ENCODE measurements at regions of chr9 and their contacts with region 1.

Region 1: GRCh38 chr9:21933865-21934264 is 60.3 kb downstream of the CDKN2A start:
- DNase-seq: no peak
- ATAC-seq: no peak

Region 2: DNA sequence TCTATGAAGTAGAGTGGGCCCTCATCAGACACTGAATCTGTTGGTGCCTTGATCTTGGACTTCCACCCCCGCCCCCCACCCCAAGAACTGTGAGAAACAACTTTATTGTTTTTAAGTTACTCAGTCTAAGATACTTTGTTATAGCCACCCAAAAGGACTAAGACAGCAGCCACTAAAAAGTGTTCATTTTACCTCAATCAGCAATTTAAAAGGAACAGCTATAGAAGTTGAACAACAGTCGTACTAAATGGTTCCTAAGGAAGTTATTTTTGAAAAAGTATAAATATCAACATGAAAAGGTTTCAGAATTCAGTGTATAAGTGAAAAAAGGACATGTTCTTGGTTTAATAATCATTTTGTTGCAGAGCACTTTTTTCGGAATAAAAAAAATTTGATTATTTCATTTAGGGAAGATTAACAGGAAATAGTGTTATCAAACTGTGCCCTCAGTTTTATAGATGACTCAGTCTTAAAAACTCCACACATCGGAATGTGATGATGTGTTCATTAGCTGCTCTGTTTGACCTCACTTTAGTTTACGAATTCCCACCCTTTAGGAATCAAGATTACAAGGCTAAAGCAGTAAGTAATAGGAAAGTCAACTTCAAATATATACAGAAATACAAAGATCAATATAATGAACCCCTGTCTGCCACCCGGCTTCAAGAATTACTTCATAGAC is 60.2 kb before region 1 on chr9:
- intact Hi-C with region 1: loop called (anchors 2 kb)
- DNase-seq: no peak
- ATAC-seq: no peak

Region 3: DNA sequence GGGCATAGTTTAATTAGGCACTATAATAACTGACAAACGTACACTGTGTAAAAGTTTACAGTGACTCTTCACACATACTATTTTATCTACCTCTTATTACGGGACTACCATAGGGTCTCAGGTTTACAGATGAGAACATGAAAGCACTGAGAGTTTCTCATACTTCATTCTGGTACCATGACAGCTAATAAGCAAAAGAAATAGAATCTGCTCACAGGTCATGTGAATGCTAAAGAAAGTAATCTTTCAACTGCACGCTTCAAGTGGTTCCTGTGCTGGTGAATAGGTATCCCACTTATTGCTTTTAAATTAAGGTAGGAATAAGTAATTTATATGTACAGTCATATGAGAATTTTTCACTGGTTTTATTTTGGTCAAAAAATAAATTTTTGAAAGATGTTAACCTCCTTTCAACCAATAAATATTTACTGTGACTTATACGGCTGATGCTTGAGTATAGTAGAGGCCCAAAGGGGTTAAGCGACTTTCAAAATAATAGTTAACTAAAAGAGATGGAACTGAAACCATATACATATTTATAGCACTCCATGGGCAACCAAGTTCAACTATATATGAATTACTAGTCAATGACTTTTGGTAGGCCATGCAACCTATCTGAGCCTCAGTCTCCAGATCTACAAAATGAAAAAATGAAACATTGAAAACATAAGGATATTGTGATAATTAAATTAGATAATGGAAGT is 52.3 kb after region 1 on chr9:
- intact Hi-C with region 1: no loop called
- DNase-seq: no peak
- ATAC-seq: no peak

Measured in sciatic nerve (tissue), 2 donors.